PC-3 (cell line): ENCODE measurements at regions of chr1 and their contacts with region 1.

Region 1: DNA sequence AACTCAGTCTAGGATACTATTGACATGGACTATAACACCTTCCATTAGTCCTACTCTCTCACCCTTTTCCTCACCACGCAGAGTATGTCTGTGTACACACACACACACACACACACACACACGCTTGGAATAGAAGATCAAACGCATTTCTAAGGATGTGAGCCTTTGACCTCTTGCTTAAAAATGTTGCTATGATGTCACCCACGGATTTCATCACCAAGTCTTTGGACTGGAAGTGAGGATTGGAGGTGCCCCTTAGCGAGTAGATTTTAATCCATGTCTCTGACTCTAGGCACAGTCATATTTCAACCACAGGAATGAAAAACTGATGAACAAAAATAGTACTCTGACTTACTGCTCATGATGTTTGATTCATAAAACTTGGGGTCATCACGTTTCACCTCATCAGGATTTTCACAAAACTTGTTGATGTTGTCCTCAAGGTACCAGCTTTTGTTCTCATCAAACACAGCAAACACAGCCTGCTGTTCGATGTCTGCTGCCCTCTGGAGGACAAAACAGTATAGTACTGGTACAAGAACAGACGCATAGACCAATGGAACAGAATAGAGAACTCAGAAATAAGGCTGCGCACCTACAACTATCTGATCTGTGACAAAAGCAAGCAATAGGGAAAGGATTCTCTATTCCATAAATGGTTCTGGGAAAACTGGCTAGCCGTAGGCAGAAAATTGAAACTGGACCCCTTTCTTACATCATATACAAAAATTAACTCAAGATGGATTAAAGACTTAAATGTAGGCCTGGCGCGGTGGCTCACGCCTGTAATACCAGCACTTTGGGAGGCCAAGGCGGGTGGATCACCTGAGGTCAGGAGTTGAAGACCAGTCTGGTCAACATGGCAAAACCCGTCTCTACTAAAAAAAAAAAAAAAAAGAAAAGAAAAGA is 39.9 kb downstream of the F5 start:
- DNase-seq: peak; percentile 90
- ATAC-seq: peak; percentile 79
- H3K4me3 ChIP-seq: no peak overlapping the region
- H3K27ac ChIP-seq: no peak overlapping the region
- H3K4me1 ChIP-seq: no peaks in the 10 kb centered on the region
- H3K27me3 ChIP-seq: no peaks in the 10 kb centered on the region
- CTCF ChIP-seq: peak; percentile 94

Region 2: DNA sequence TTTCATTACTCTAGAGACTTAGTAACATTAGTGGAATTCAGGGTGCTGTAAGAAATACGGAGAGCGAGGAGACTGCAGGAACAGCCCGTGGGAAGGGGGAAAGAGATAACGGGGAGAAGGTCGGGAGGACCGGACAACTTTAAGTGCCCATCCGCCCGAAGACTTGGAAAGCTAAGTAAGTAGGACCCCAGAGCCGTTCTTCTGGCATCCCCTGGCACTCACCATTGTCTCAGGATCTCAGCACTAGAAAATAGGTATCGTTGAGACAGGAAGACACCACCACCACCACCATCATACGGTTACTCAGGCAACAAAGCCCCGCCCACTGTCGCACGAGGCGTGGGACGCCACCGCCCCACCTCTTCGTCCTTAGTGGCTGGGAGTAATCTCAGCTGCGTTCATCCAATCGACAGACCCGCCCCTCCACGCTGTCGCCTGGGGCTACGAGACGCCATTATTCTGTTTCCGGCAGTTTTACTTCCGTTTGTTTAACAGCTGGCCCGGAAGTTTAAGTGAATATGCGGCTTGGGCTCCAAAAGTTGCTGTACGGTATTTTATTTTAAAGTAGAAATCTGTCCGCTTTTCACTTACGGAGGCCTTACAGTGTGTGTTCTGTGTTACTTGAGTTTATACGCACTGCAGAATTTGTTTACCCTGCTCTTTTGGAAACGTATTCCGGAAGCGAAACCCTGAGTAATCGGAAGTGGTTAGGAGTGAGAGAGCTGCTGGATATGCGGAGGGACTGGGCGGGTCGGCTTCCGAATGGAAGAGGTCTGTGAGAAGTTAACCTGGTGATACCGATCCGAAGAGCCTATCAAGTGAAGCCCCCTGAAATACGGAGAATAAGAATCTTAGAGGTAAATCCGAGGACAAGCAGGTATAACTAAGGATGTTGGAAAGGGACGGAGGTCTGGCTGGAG is 178.6 kb before region 1 on chr1 and contains the starts of genes BLZF1 and NME7:
- CTCF ChIA-PET with region 1: no interaction called
- POLR2A ChIA-PET with region 1: no interaction called
- intact Hi-C with region 1: loop called (anchors 5 kb)
- DNase-seq: peak; percentile 100
- ATAC-seq: peak; percentile 90
- H3K4me3 ChIP-seq: peak within 1 kb of the TSS; percentile 92
- H3K27ac ChIP-seq: peak within 1 kb of the TSS; percentile 87
- H3K4me1 ChIP-seq: peaks cover 46% of the 10 kb centered on the region
- H3K27me3 ChIP-seq: no peaks in the 10 kb centered on the region
- CTCF ChIP-seq: no peak
- total RNA-seq, gene BLZF1: 30.6 and 37.4 TPM in 2 replicates
- total RNA-seq, gene NME7: 18.6 and 18.9 TPM in 2 replicates

Region 3: DNA sequence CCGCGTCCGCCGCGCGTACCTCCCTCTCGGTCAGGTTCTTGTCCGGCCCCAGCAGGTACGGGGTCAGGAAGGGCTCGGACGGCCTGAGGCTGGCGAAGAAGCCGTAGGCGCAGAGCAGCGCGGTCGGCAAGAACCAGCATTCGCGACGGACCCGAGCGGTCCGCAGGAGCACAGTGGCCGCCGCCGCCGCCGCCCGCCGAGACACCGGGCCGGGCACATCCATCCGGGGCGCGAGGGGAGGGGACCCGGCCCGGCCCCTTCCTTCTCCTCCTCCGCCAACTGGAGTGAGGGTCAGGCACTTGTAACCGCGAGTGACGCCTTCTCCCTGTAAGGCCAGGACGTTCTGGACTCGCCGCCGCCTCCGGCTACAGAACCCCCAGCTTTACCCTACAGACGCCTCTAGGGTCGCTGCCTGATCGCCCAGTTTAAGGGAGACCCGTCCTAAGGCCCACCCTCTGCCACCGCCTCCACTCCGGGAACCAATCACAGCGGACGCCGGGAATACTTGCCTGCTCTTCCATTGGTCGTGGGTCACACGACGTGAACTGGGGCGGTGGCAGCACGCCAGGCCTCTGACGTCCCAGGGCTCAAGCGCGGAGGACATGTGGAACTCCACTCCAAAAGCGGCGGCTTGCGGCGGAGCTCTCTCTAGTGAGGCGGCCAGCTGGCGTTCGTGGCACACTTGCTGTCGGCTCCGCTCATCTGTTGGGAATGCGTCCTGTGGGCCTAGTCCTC is 60.6 kb before region 1 on chr1 and contains the start of gene SLC19A2:
- CTCF ChIA-PET with region 1: interaction called, 6 read pairs
- POLR2A ChIA-PET with region 1: no interaction called
- intact Hi-C with region 1: loop called (anchors 1 kb)
- DNase-seq: peak; percentile 100
- ATAC-seq: peak; percentile 94
- H3K4me3 ChIP-seq: peak within 1 kb of the TSS; percentile 76
- H3K27ac ChIP-seq: peak within 1 kb of the TSS; percentile 76
- H3K4me1 ChIP-seq: peaks cover 45% of the 10 kb centered on the region
- H3K27me3 ChIP-seq: no peaks in the 10 kb centered on the region
- CTCF ChIP-seq: peak; percentile 41; the same call in 1 of the 2 replicates
- total RNA-seq, gene SLC19A2: 8.6 and 11.0 TPM in 2 replicates

Region 4: DNA sequence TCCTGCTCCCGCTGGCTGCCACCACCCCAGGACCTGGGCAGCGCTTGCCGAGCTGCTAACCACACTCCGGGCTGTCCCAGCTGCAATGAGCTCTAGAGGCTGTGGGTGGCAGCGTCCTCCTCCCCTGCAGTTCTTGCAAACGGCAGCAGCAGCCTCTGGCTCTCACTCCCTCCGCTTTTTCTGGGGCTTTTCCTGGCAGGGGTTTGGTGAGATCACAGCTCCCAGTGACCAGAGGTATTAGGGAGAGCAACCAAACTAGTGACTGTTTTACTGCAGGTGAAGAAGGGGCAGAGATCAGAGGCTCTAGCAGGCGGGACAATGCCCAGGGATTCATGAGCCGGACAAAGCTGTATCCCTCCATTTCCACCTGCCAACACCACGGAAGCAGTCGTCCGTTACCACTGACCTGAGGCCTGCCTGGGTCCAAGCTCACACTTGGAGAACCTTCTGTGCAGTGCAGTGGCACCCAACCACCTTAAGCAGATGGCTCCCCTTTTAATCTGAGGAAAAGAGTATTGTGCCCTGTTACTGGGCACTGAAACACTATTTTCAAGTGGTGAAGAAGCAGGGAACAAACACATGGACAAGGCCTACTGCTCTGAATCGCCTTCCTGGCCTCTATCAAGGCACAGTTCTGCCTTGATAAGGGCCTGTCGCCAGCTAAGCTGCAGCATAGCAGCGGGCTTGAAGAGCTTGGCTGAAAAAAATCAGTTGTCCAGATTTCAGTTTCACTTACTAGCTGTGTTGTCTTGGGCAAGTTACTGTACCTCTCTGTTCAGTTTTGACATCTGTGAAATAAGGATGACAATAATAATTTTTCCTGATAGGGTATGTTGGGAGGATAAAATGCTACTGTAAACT is 40.3 kb after region 1 on chr1 and contains the start of gene F5:
- CTCF ChIA-PET with region 1: no interaction called
- POLR2A ChIA-PET with region 1: no interaction called
- intact Hi-C with region 1: loop called (anchors 5 kb)
- DNase-seq: peak; percentile 84
- ATAC-seq: peak; percentile 100
- H3K4me3 ChIP-seq: peak within 1 kb of the TSS; percentile 53
- H3K27ac ChIP-seq: no peak within 1 kb of the TSS
- H3K4me1 ChIP-seq: peaks cover 19% of the 10 kb centered on the region
- H3K27me3 ChIP-seq: peaks cover 24% of the 10 kb centered on the region
- CTCF ChIP-seq: peak; percentile 78
- total RNA-seq, gene F5: not detected in 2 replicates

Region 5: GRCh38 chr1:169610108-169610507 is 63.8 kb after region 1 on chr1:
- CTCF ChIA-PET with region 1: no interaction called
- POLR2A ChIA-PET with region 1: no interaction called
- intact Hi-C with region 1: no loop called
- DNase-seq: peak; percentile 42
- ATAC-seq: peak; percentile 67
- H3K4me3 ChIP-seq: no peak overlapping the region
- H3K27ac ChIP-seq: no peak overlapping the region
- H3K4me1 ChIP-seq: no peaks in the 10 kb centered on the region
- H3K27me3 ChIP-seq: peaks cover 77% of the 10 kb centered on the region
- CTCF ChIP-seq: no peak

Region 6: GRCh38 chr1:169711469-169712281 is 165.3 kb after region 1 on chr1 and contains the start of gene SELL:
- CTCF ChIA-PET with region 1: no interaction called
- POLR2A ChIA-PET with region 1: no interaction called
- intact Hi-C with region 1: loop called (anchors 1 kb)
- DNase-seq: peak; percentile 92
- ATAC-seq: peak; percentile 99
- H3K4me3 ChIP-seq: peak within 1 kb of the TSS; percentile 63
- H3K27ac ChIP-seq: no peak within 1 kb of the TSS
- H3K4me1 ChIP-seq: peaks cover 6% of the 10 kb centered on the region; the same call in 1 of the 2 replicates
- H3K27me3 ChIP-seq: peaks cover 6% of the 10 kb centered on the region; the same call in 1 of the 2 replicates
- CTCF ChIP-seq: peak; percentile 95
- total RNA-seq, gene SELL: 0.69 and 1.2 TPM in 2 replicates